Caco-2 (cell line): ENCODE measurements at regions of chr16 and their contacts with region 1.

Region 1: DNA sequence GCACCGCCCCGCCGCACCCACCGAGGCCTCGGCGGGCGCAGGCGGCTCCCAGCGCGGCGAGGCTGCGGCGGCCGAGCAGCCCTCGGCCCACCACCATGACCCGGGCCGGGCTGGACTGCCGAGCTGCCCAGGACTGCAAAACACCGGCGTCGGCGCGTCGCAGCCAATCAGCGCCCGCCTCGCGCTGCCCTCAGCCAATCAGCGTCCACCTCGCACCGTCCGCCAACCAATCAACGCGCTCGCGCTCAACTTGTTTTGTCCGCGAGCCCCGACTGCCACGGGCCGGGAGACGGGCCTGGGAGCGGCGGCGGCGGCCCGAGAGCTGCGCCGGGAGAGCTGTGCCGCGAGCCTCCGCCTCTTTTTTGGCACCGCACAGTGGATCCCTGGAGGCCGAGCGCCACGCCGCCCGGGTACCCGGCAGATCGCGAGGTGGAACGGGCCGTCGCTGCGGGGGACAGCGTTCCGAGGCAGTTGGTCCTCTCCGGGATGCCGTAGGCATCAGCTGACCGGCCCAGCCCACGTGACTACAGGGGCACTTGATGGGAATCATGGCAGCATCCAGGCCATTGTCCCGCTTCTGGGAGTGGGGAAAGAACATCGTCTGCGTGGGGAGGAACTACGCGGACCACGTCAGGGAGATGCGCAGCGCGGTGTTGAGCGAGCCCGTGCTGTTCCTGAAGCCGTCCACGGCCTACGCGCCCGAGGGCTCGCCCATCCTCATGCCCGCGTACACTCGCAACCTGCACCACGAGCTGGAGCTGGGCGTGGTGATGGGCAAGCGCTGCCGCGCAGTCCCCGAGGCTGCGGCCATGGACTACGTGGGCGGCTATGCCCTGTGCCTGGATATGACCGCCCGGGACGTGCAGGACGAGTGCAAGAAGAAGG is at the starts of genes FAHD1 and HAGH:
- DNase-seq: peak; percentile 90 to 94
- H3K4me3 ChIP-seq: peak within 1 kb of the TSS; percentile 76
- H3K4me3 Mint-ChIP-seq: peak within 1 kb of the TSS; percentile 87
- H3K27ac Mint-ChIP-seq: peak within 1 kb of the TSS; percentile 86
- H3K4me1 ChIP-seq: peaks cover 10% of the 10 kb centered on the region; the same call in 1 of the 2 replicates
- H3K4me1 Mint-ChIP-seq: no peaks in the 10 kb centered on the region
- H3K27me3 ChIP-seq: no peaks in the 10 kb centered on the region
- H3K27me3 Mint-ChIP-seq: no peaks in the 10 kb centered on the region
- CTCF ChIP-seq: no peak
- total RNA-seq, gene FAHD1: 16.5 and 21.1 TPM in 2 replicates
- total RNA-seq, gene HAGH: 39.9 and 48.1 TPM in 2 replicates

Region 2: DNA sequence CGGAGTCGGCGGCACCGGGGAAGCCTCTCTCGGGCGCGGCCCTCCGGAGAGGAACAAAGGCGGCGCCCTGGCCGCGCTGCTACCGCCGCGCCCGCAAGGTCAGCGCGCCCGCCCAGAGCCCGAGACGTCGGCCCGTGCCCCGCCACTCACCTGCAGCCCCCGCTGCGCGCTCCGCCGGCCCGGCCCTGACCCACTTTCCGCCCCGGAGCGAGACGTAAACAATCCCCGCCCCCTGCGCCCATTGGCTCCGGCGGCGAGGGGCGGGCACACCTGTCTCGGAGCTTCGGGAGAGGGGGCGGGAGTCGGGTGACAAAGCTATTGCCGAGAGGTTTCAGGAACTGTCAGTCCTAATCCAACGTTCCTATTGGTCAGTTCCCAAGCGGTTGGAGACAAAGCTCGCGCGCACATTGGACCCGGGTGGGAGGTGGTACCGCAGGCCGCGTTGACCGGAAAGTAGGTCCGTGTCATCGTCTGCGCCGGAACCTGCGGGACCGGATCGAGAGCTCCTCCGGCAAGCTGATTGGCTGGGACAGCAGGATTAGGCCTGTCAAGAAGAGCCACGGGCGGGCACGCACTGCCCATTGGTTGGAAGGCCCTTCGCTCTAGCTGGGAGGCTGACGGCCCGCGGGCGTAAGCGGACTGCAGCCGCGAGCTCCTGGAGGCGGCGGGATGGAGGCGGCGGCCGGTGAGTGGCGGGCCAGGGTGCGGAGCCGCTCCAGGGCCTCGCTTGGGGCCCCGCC is 44.4 kb before region 1 on chr16 and contains the starts of genes NUBP2 and SPSB3:
- CTCF ChIA-PET with region 1: interaction called, 4 read pairs
- POLR2A ChIA-PET with region 1: interaction called, 14 read pairs
- intact Hi-C with region 1: loop called (anchors 5 kb)
- DNase-seq: peak; percentile 99 to 100
- H3K4me3 ChIP-seq: peak within 1 kb of the TSS; percentile 93
- H3K4me3 Mint-ChIP-seq: peak within 1 kb of the TSS; percentile 86
- H3K27ac Mint-ChIP-seq: peak within 1 kb of the TSS; percentile 81
- H3K4me1 ChIP-seq: peaks cover 7% of the 10 kb centered on the region
- H3K4me1 Mint-ChIP-seq: peaks cover 8% of the 10 kb centered on the region
- H3K27me3 ChIP-seq: no peaks in the 10 kb centered on the region
- H3K27me3 Mint-ChIP-seq: no peaks in the 10 kb centered on the region
- CTCF ChIP-seq: no peak
- total RNA-seq, gene NUBP2: 61.9 and 65.3 TPM in 2 replicates
- total RNA-seq, gene SPSB3: 26.0 and 28.0 TPM in 2 replicates